ENCODE measurements at regions of chr19 and their contacts with region 1.

Region 1: GRCh38 chr19:13195678-13196077 is 45.5 kb downstream of the IER2 start:
- DNase-seq: peak; percentile 72
- ATAC-seq: peak; percentile 62
- H3K4me3 Mint-ChIP-seq: no peak overlapping the region
- H3K27ac Mint-ChIP-seq: no peak overlapping the region
- H3K4me1 Mint-ChIP-seq: peaks cover 22% of the 10 kb centered on the region
- H3K27me3 Mint-ChIP-seq: no peaks in the 10 kb centered on the region

Region 2: GRCh38 chr19:13155472-13156359 is 40.0 kb before region 1 on chr19:
- CTCF ChIA-PET with region 1: interaction called, 11 read pairs
- DNase-seq: peak; percentile 91
- ATAC-seq: peak; percentile 9
- H3K4me3 Mint-ChIP-seq: peak overlapping the region; percentile 96
- H3K27ac Mint-ChIP-seq: peak overlapping the region; percentile 100
- H3K4me1 Mint-ChIP-seq: peaks cover 45% of the 10 kb centered on the region
- H3K27me3 Mint-ChIP-seq: no peaks in the 10 kb centered on the region

Region 3: DNA sequence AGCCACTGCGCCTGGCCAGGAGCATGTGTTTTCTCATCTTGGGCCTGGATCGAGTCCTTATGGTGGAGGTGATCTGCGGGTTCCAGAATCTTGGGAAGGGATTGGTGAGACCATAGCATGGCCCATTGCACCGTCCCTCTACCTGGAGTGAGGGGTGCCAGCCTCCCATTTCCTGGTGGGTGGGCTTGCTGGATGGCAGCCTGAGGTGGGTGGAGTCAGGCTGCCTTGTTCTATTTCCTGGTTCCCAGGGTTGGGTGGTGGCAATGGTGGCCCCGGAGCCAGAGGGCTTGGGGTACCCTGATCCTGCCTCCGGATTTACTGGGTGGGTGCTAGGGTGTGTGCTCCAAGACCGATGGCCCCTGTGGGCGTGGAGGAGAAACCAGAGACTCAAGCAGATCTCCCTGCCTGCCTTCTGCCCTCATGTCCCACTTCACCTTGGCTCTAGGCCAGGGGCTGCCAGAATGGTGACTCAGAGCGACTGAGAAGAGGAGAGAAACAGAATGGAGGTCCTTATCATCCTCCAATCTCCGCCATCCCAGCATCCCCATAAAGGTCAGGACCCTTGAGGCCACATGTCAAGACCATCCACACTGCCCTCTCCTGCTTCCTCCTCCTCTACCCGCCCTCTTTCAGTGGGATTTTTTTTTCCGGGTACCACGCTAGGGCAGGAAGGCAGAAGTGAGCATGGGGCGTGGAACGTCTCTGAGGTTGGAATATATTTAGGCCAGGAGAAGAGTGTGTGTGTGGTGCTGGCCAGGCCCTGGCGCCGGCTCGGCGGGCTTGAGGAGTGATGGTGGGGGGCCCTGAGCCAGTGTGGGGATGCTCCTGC is 23.4 kb before region 1 on chr19:
- CTCF ChIA-PET with region 1: interaction called, 63 read pairs
- DNase-seq: peak; percentile 82
- ATAC-seq: peak; percentile 5
- H3K4me3 Mint-ChIP-seq: peak overlapping the region; percentile 71
- H3K27ac Mint-ChIP-seq: peak overlapping the region; percentile 95
- H3K4me1 Mint-ChIP-seq: peaks cover 55% of the 10 kb centered on the region
- H3K27me3 Mint-ChIP-seq: no peaks in the 10 kb centered on the region

Region 4: DNA sequence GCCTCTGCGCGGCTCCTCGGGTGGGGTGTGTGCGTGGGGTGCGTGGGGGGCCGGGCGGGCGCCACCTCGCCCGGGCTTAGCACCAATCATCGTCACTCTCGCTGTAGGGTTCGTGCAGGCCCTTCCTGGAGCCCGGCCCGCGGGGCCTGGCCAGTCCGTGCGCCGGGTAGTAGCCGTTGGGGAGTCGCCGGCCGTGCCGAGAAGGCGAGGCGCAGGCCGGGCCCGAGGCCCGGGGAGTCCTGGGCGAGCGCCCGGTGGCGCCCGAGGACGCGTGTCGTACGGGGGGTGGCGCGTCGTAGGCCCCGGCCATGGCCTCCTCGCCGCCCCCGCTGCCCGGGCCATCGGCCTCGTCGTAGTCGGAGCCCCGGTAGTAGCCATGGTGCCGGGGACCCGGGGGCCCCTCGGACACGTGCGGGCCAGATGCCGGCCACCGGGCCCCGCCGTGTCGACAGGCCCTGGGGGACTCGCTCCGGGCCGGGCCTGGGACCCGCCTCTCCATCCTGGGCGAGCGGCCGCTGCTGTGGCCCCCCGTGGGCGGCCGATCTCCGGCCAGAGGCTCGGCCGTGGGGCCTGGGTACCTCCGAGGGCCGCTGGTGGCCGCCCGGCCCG is 11.7 kb after region 1 on chr19:
- CTCF ChIA-PET with region 1: interaction called, 31 read pairs
- DNase-seq: no peak
- ATAC-seq: no peak
- H3K4me3 Mint-ChIP-seq: no peak overlapping the region
- H3K27ac Mint-ChIP-seq: no peak overlapping the region
- H3K4me1 Mint-ChIP-seq: peaks cover 6% of the 10 kb centered on the region
- H3K27me3 Mint-ChIP-seq: no peaks in the 10 kb centered on the region

Region 5: DNA sequence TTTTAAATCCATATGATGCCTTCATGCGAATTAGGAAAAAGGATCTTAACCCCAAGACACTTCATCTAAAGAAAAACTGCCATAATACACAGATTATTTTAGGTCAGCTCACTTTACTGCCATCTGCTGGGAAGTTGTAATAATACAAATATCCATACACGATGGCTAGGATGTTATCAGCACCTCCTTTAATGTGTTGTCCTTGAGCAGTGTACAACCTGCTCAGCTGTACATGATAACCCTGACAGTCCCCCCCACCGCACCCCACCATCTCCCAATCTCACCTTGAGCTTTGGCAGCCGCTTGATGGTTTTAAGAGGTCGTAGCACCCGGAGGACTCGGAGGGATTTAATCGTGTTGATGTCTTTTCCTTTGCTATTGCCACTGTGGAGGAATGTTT is 66.8 kb after region 1 on chr19:
- CTCF ChIA-PET with region 1: interaction called, 85 read pairs
- DNase-seq: no peak
- ATAC-seq: no peak
- H3K4me3 Mint-ChIP-seq: no peak overlapping the region
- H3K27ac Mint-ChIP-seq: no peak overlapping the region
- H3K4me1 Mint-ChIP-seq: peaks cover 17% of the 10 kb centered on the region
- H3K27me3 Mint-ChIP-seq: peaks cover 25% of the 10 kb centered on the region

Region 6: DNA sequence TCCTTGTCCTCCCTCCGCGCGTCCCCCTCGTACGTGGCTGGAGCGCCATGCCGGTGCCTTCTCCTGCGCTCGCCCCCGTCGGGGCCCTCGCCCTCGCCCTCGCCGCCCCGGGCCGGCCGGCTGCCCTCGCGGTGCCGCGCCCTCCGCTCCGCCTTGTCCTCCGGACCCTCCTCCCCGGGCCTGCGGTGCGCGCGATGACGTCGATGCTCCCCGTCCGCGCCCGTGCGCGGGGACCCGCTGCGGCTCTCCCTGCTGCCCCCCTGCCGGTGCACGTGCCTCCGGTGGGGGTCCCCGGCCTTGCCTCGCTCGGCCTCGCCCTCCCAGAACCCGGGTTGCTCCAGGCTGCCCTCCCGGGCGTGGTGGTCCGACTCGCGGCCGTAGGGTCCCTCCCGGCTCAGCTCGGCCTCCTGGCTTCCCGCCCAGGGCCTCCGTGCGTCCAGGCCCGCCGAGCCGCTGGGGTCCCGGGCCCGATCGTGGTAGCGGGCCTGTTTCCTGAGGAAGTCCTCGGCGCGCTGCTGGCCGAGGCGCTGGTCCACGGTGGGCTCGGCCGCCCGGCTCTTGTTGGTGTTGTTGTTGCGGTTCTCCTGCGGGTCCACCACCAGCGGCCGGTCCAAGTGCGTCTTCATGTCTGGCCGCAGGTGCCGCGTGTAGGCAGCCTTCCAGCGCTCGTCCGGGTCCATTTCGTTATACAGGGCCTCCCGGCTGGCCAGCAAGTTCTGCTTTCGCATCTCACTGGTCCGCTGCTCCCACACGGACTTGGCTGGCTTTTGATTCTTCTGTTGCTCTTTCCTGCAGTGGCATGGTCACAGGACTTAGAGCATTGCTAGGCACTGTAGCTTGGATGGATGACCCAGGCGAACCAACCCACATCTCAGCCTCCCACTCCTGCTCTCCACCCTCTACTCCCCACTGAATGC is 103.1 kb after region 1 on chr19:
- CTCF ChIA-PET with region 1: no interaction called
- DNase-seq: no peak
- ATAC-seq: no peak
- H3K4me3 Mint-ChIP-seq: no peak overlapping the region
- H3K27ac Mint-ChIP-seq: no peak overlapping the region
- H3K4me1 Mint-ChIP-seq: no peaks in the 10 kb centered on the region
- H3K27me3 Mint-ChIP-seq: peaks cover 26% of the 10 kb centered on the region

Region 7: GRCh38 chr19:13366529-13367143 is 171.0 kb after region 1 on chr19:
- CTCF ChIA-PET with region 1: no interaction called
- DNase-seq: no peak
- ATAC-seq: no peak
- H3K4me3 Mint-ChIP-seq: no peak overlapping the region
- H3K27ac Mint-ChIP-seq: no peak overlapping the region
- H3K4me1 Mint-ChIP-seq: no peaks in the 10 kb centered on the region
- H3K27me3 Mint-ChIP-seq: no peaks in the 10 kb centered on the region